PC-9 (cell line): ENCODE measurements at regions of chr1 and their contacts with region 1.

Region 1: GRCh38 chr1:22025368-22026155 is 24.1 kb downstream of the CELA3A start:
- DNase-seq: peak; percentile 80 to 85
- H3K4me3 ChIP-seq: peak overlapping the region; percentile 87
- H3K27ac ChIP-seq: peak overlapping the region; percentile 87
- H3K4me1 ChIP-seq: peaks cover 4% of the 10 kb centered on the region
- H3K27me3 ChIP-seq: no peaks in the 10 kb centered on the region
- CTCF ChIP-seq: no peak

Region 2: DNA sequence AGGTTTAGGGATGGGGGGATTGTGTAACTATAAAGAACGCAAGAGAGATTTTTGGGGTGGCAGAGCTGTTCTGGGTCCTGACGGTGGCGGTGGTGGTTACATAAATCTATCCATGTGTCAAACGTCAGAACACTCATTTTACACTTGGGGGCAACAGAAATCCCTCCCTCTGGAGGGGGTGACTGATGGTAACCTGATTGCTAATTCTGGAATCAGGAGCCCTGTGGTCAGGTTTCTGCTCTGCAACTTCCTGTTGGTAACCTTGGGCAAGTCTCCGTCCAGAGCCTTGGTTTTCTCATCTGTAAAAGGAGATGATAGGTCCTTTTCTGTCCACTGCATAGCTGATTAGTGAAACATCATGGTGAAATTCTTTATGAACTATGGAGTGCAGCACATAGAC is 475.5 kb before region 1 on chr1:
- CTCF ChIA-PET with region 1: no interaction called
- POLR2A ChIA-PET with region 1: interaction called, 12 read pairs
- intact Hi-C with region 1: no loop called
- DNase-seq: no peak
- H3K4me3 ChIP-seq: no peak overlapping the region
- H3K27ac ChIP-seq: no peak overlapping the region
- H3K4me1 ChIP-seq: no peaks in the 10 kb centered on the region
- H3K27me3 ChIP-seq: no peaks in the 10 kb centered on the region
- CTCF ChIP-seq: no peak

Region 3: GRCh38 chr1:21963477-21964217 is 61.9 kb before region 1 on chr1:
- CTCF ChIA-PET with region 1: no interaction called
- POLR2A ChIA-PET with region 1: no interaction called
- intact Hi-C with region 1: loop called (anchors 10 kb)
- DNase-seq: peak; percentile 50 to 82
- H3K4me3 ChIP-seq: no peak overlapping the region
- H3K27ac ChIP-seq: no peak overlapping the region
- H3K4me1 ChIP-seq: peaks cover 9% of the 10 kb centered on the region; the same call in 1 of the 2 replicates
- H3K27me3 ChIP-seq: no peaks in the 10 kb centered on the region
- CTCF ChIP-seq: peak; percentile 86

Region 4: GRCh38 chr1:22052115-22053016 is 26.8 kb after region 1 on chr1 and contains the start of gene CDC42:
- CTCF ChIA-PET with region 1: interaction called, 4 read pairs
- POLR2A ChIA-PET with region 1: interaction called, 20 read pairs
- intact Hi-C with region 1: loop called (anchors 1 kb)
- DNase-seq: peak; percentile 80 to 97
- H3K4me3 ChIP-seq: peak within 1 kb of the TSS; percentile 90
- H3K27ac ChIP-seq: peak within 1 kb of the TSS; percentile 79
- H3K4me1 ChIP-seq: peaks cover 20% of the 10 kb centered on the region
- H3K27me3 ChIP-seq: no peaks in the 10 kb centered on the region
- CTCF ChIP-seq: no peak
- total RNA-seq, gene CDC42: 119 and 183 TPM in 2 replicates

Region 5: DNA sequence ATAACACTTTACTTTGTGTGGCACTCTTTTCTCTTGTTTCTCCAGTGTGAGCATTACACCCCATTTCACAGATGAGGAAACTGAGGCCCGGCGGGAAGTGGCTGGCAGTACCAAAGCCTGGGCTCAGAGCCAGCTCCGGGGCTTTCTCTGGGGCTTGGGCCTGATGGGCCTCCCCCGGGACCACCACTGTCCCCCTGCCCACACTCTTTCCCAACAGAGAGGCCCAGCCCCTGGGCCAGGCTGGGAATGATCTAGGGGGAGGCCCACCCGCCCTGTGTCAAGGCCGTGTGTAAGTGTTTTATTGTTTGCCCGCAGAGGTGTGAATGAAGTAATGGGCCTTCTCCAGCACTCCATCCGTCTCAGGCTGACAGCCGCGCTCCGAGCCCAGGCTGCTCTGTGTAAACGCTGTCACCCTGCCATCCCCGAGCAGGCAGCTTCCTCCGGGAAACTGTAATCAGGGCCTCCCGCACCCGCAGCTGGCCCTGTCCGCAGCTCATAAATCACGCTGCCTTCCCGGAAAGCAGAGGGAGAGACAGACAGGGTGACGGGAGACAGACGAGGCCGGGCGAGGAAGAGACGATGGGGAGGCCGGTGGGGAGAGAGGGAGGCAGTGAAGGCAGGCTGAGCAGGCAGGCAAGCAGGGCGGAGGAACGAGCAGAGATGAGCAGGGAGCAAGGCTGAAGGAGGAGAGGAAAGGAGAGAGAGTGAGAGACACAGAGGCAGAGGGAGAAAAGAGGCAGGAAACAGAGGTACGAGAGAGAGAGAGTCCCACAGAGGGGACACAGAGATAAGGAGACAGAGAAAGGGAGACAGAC is 316.4 kb after region 1 on chr1:
- CTCF ChIA-PET with region 1: no interaction called
- POLR2A ChIA-PET with region 1: no interaction called
- intact Hi-C with region 1: no loop called
- DNase-seq: no peak
- H3K4me3 ChIP-seq: no peak overlapping the region
- H3K27ac ChIP-seq: no peak overlapping the region
- H3K4me1 ChIP-seq: no peaks in the 10 kb centered on the region
- H3K27me3 ChIP-seq: no peaks in the 10 kb centered on the region
- CTCF ChIP-seq: no peak